Left lung (tissue), 14 donors: ENCODE measurements at regions of chr2 and their contacts with region 1.

Region 1: GRCh38 chr2:175684457-175684856 is 317.6 kb downstream of the LNPK start:
- DNase-seq: no peak
- ATAC-seq: no peak
- H3K4me3 ChIP-seq: no peak overlapping the region
- H3K27ac ChIP-seq: no peak overlapping the region
- H3K4me1 ChIP-seq: no peaks in the 10 kb centered on the region
- H3K27me3 ChIP-seq: peaks cover 0 to 46% of the 10 kb centered on the region in 2 donors
- CTCF ChIP-seq: no peak

Region 2: DNA sequence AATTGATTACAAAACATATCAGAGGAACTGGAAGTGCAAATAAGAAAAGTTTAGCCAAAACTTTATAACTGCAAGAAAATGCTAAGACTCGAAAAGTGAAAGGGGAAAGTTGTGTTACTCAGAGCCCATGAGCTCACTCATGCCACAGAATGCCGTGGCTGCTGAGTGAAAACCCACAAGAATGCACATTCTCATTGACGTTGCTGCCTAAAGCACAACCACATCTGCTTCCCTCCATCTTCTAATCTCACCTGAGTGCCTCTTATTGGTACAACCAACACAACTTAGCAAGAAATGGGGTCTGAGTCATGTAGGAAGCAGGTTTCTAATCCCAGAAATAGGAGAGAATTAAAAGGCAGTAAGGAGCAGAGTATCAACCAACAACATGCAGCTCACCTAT is 57.9 kb after region 1 on chr2:
- intact Hi-C with region 1: no loop called
- DNase-seq: no peak
- ATAC-seq: no peak
- H3K4me3 ChIP-seq: no peak overlapping the region
- H3K27ac ChIP-seq: no peak overlapping the region
- H3K4me1 ChIP-seq: no peaks in the 10 kb centered on the region
- H3K27me3 ChIP-seq: no peaks in the 10 kb centered on the region
- CTCF ChIP-seq: no peak

Region 3: GRCh38 chr2:176096986-176097819 is 412.7 kb after region 1 on chr2:
- intact Hi-C with region 1: loop called in 1 of 2 experiments (anchors 10 kb)
- DNase-seq: peak in 3 of 4 donors; percentile 56 to 86 (median 80)
- ATAC-seq: peak; percentile 97
- H3K4me3 ChIP-seq: peak overlapping the region; percentile 3 to 34
- H3K27ac ChIP-seq: no peak overlapping the region
- H3K4me1 ChIP-seq: peaks cover 3 to 30% of the 10 kb centered on the region in 2 donors
- H3K27me3 ChIP-seq: peaks cover 99 to 100% of the 10 kb centered on the region in 2 donors
- CTCF ChIP-seq: peak; percentile 67 to 75